ENCODE measurements at regions of chr18 and their contacts with region 1.

Region 1: GRCh38 chr18:2932247-2933181 is 80.4 kb downstream of the LPIN2 start:
- DNase-seq: no peak
- ATAC-seq: peak; percentile 6 to 48

Region 2: GRCh38 chr18:3062798-3063680 is 130.5 kb after region 1 on chr18:
- intact Hi-C with region 1: loop called (anchors 2 to 5 kb)
- DNase-seq: peak; percentile 76
- ATAC-seq: peak; percentile 56 to 77

Region 3: GRCh38 chr18:3110034-3110752 is 177.7 kb after region 1 on chr18:
- intact Hi-C with region 1: no loop called
- DNase-seq: no peak
- ATAC-seq: no peak

Region 4: GRCh38 chr18:3129053-3129864 is 196.7 kb after region 1 on chr18:
- intact Hi-C with region 1: loop called in 1 of 2 experiments (anchors 10 kb)
- DNase-seq: peak; percentile 88
- ATAC-seq: peak; percentile 90 to 94